ENCODE measurements at regions of chr6 and their contacts with region 1.

Region 1: DNA sequence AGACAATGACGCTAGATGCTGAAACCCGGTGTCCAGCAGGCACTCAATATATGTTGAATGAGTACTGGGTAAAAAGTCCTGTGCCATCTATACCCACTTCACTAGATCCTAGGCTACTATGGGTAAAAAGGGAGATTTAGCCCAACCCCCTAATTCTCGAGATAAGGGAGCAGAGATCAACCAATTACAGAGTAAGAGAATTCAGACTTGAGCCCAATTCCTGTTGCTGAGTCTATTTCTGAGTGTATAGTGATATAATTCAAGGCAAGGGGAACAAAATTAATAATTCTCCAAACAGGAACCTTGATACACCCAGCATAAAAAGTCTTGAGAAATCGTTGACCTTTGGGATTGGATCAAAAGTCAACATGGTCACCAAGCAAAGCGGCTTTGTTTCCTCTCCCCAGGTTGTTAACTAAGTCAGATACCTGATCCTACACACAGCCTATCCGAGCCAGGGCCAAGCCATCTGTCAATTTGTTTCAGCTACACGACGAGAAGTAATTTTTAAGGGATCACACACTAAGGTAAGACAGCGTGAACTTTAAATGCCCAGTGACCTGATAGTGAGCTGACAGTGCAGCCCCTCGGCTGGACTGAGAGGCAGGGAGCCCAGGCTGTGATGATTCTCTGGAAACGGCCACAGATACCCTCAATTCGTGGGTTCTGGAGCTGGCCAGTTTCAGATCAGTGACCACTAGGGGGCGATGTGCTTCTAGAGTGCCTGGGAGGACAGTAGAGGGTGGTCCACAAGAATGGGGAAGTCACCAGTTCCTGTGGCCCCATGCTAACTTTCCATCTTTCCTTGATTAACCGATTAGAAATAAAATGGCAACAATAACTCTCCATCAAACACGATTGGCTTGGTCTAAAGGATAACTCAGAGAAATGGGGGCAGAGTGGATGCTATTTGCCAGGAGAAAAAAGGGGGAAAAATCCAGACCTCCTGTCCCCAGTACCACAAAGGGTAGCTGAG is 46.2 kb downstream of the SLC22A23 start:
- DNase-seq: peak; percentile 19 to 70
- ATAC-seq: peak in 5 of 8 donors; percentile 29 to 64 (median 54)
- H3K4me3 ChIP-seq: no peak overlapping the region
- H3K27ac ChIP-seq: no peak overlapping the region
- H3K4me1 ChIP-seq: peaks cover 0 to 5% (median 0%) of the 10 kb centered on the region in 9 donors
- H3K27me3 ChIP-seq: no peaks in the 10 kb centered on the region
- CTCF ChIP-seq: peak; percentile 39 to 80 (median 70)

Region 2: GRCh38 chr6:3707024-3707423 is 296.4 kb after region 1 on chr6:
- intact Hi-C with region 1: loop called in 1 of 10 experiments (anchors 10 kb)
- DNase-seq: no peak
- ATAC-seq: peak in 4 of 8 donors; percentile 45 to 79 (median 70)
- H3K4me3 ChIP-seq: no peak overlapping the region
- H3K27ac ChIP-seq: peak overlapping the region in 1 of 10 donors; percentile 24
- H3K4me1 ChIP-seq: peaks cover 0 to 5% (median 0%) of the 10 kb centered on the region in 9 donors
- H3K27me3 ChIP-seq: no peaks in the 10 kb centered on the region
- CTCF ChIP-seq: no peak

Region 3: DNA sequence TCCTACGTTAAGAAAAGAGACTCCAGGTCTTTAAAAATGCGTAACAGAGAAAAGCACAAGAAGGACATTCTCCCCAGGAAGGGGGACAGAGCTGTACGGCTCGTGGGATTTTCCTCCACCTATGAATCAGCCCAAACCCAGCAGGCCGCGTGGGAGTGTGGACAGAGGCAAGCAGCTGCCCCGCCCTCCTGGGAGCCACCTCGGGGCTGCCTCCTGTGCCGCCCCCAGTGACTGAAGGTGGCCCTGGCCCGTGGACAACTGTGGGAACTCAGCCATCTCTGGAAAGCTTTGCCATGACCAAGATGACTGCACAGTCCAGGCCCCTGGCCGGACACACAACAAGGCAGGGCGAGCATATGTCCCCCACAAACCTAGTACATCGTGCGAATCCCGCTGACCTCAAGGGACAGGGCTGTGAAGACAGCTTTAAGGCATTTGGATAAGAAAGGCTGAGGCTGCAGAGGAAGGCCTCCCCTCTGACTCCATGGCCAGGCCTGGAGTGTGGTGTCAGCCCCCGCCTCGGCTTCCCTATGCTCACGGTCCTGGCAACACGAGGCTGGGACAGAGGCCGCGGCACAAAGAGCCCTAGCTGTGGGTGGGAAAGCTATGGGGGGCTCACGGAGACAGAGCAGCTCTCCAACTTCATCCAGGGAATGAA is 313.9 kb after region 1 on chr6:
- intact Hi-C with region 1: loop called in 1 of 10 experiments (anchors 5 kb)
- DNase-seq: peak in 1 of 2 donors; percentile 48
- ATAC-seq: peak; percentile 14 to 71 (median 44)
- H3K4me3 ChIP-seq: no peak overlapping the region
- H3K27ac ChIP-seq: peak overlapping the region in 8 of 10 donors; percentile 1 to 73 (median 36)
- H3K4me1 ChIP-seq: peaks cover 10 to 62% (median 47%) of the 10 kb centered on the region in 9 donors
- H3K27me3 ChIP-seq: no peaks in the 10 kb centered on the region
- CTCF ChIP-seq: no peak

Measured in heart right ventricle (tissue), 16 donors.